ENCODE measurements at regions of chr1 and their contacts with region 1.

Region 1: DNA sequence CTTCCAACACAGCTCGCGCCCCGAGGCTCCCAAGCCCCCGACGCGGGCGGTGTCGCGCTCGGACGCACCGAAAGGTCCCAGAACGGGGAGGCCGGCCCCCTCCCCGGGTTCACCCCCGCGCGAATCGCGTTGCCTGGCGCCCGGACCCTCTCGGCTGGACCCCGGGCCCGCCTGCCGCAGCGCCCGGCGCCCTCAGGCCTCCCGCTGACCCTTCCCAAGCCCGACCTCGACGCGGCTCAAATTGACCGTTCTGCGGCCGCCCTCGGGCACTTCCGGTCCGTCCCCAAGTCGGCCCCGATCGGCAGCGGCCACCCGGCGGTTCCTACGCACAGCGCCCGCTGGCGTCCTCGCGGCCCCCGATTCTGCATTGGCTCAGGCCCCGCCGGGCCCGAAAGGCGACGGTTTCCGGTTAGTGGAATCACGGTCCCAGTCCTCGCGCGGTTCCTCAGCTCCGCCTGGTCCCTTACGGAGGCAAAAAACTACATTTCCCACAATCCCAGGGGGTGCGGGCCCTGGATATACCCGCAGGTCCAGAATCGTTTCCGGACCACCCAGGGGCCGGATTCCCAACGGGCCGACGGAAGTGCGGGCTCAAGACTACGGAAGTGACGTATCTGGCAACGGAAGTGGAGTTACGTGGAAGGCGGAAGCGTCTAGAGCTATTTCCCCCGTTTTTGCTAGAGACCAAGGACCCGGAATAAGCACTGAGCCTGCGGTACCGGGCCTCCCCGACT is at the start of gene AURKAIP1:
- DNase-seq: peak; percentile 100
- ATAC-seq: peak; percentile 95
- H3K4me3 ChIP-seq: peak within 1 kb of the TSS; percentile 59
- H3K27ac ChIP-seq: peak within 1 kb of the TSS; percentile 59
- H3K4me1 ChIP-seq: peaks cover 12% of the 10 kb centered on the region
- H3K27me3 ChIP-seq: no peaks in the 10 kb centered on the region
- CTCF ChIP-seq: peak; percentile 59
- POLR2A ChIP-seq: peak; percentile 78; the same call in 1 of the 2 replicates
- RAD21 ChIP-seq: no peak
- total RNA-seq, gene AURKAIP1: 45.7 and 63.0 TPM in 2 replicates

Region 2: DNA sequence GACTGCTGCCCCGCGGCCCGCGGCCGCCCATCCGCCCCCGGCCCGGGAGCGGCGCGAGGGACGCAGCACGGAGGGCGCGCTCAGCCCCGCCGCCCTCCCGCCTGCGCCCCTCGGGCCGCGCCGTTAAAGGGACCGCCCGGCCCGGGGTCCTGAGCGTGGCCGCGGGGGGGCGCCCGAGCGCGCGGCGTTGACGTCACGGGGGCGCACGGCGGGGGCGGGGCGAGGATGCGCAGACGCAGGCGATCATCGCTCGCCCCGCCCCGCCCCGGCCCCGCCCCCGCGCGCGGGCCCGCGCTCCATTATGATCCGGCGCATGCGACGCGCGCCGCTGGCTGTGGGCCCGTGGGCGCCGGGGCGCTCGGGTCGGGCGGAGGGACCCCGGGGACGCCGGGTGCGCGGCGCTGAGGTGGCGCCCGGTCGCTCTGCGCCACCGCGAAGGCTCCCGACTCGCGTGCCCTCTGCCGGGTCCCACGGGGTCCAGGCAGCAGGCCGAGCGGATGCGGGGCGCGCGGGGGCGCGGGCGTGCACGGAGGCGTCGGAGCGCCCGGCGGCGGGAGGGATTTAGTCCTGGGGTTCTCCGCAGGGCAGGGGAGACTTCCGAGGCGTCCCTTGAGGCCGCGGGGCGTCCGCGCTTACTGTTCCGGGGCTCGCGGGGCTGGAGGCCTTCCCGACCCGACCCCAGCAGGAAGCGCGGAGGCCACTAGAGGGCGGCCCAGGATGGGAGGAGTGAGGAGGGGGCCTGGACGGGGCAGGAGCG is 25.7 kb before region 1 on chr1 and contains the start of gene DVL1:
- CTCF ChIA-PET with region 1: interaction called, 3 read pairs
- POLR2A ChIA-PET with region 1: interaction called, 3 read pairs
- dilution Hi-C with region 1: no loop called
- in situ Hi-C with region 1: no loop called
- intact Hi-C with region 1: loop called (anchors 1 kb)
- DNase-seq: peak; percentile 58
- ATAC-seq: peak; percentile 67
- H3K4me3 ChIP-seq: peak within 1 kb of the TSS; percentile 100
- H3K27ac ChIP-seq: peak within 1 kb of the TSS; percentile 79
- H3K4me1 ChIP-seq: peaks cover 49% of the 10 kb centered on the region
- H3K27me3 ChIP-seq: no peaks in the 10 kb centered on the region
- CTCF ChIP-seq: peak; percentile 51
- POLR2A ChIP-seq: no peak
- RAD21 ChIP-seq: peak; percentile 51
- total RNA-seq, gene DVL1: 27.2 and 27.5 TPM in 2 replicates

Region 3: DNA sequence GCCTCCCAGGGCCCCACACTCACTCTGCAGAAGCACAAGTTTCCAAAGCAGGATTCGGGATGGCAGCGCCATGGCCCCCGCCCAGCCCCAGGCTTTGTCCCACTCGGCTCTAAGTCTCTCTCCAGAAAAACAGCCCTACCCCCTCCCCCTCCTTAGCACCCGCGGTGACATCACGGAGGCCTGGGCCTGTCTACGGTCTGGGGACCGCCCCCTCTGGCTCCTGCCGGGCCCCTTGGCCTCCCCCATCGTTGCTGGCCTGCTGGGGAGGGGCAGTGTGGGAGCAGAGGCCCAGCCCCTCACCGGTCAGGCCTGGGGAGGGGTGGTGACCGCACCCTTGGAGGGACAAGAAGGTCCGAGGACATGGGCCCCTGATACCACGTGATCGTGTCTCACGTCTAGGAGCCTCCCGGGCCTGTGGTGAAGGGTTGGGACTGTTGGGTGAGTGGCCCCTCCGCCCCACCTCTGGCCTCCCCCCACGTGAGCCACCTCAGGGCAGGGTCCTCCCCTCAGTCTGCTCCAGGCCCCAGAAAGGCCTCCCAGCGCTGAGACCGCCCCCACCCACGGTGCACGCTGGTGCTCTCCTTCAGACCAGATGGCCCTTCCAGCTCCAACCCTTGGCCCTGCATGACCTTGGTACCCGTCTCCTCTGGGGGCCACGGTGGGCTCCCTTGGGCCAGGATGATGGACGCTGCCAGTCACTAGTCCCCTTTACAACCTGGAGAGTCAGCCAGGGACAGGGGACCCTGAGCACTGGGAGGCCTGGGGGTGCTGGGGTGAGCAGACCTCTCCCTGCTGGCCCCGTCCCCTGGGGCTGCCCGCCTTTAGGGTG is 16.4 kb before region 1 on chr1 and contains the start of gene MXRA8:
- CTCF ChIA-PET with region 1: no interaction called
- POLR2A ChIA-PET with region 1: interaction called, 3 read pairs
- dilution Hi-C with region 1: no loop called
- in situ Hi-C with region 1: no loop called
- intact Hi-C with region 1: loop called (anchors 2 kb)
- DNase-seq: peak; percentile 82
- ATAC-seq: peak; percentile 59
- H3K4me3 ChIP-seq: peak within 1 kb of the TSS; percentile 74
- H3K27ac ChIP-seq: peak within 1 kb of the TSS; percentile 96
- H3K4me1 ChIP-seq: peaks cover 35% of the 10 kb centered on the region
- H3K27me3 ChIP-seq: no peaks in the 10 kb centered on the region
- CTCF ChIP-seq: no peak
- POLR2A ChIP-seq: peak; percentile 65; the same call in 1 of the 2 replicates
- RAD21 ChIP-seq: no peak
- total RNA-seq, gene MXRA8: 92.5 and 97.8 TPM in 2 replicates

Region 4: DNA sequence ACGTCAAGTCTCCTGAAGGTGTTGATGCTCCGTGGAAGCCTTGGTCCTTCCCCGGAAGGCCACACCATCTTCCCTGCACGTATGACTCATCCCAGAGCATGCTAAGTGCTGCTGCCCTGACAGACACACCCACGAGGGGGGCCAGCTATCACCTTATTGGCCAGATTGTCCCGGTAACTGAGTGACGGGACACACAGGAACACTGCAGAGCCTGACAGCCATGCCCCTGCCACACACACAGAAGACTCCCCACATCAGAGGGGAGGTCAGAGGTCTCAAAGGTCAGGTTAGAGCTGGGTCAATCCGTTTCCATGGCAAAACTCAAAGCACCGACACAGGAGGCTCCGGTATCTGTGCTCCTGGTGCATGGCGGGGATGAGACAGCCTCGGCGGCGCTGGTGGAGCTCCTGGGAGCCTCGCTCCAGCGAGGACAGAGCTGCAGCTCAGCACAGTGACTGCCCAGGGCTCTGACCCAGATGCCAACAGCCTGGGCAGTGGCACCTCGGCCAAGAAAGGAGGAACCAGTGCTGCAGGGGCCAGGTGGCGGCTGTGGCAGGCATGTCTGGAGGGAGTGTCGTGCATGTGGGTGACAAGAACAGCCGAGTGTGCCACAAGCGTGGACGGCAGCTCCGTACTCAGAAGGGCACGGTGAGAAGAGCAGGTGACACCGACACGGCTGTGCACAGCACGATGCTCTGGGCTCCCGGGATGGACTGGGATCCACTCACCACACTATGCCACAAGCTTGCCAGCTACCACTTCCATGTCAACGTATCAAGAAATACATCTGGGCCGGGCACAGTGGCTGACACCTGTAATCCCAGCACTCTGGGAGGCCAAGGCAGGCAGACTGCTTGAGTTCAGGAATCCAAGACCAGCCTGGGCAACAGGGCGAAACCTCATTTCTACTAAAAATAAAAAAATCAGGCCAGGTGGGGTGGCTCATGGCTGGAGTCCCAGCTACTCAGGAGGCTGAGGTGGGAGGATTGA is 180.1 kb after region 1 on chr1:
- CTCF ChIA-PET with region 1: no interaction called
- POLR2A ChIA-PET with region 1: no interaction called
- dilution Hi-C with region 1: no loop called
- in situ Hi-C with region 1: no loop called
- intact Hi-C with region 1: no loop called
- DNase-seq: peak; percentile 86
- ATAC-seq: peak; percentile 91
- H3K4me3 ChIP-seq: no peak overlapping the region
- H3K27ac ChIP-seq: no peak overlapping the region
- H3K4me1 ChIP-seq: peaks cover 5% of the 10 kb centered on the region; the same call in 1 of the 2 replicates
- H3K27me3 ChIP-seq: no peaks in the 10 kb centered on the region
- CTCF ChIP-seq: no peak
- POLR2A ChIP-seq: no peak
- RAD21 ChIP-seq: no peak